ENCODE measurements at regions of chr3 and their contacts with region 1.

Region 1: DNA sequence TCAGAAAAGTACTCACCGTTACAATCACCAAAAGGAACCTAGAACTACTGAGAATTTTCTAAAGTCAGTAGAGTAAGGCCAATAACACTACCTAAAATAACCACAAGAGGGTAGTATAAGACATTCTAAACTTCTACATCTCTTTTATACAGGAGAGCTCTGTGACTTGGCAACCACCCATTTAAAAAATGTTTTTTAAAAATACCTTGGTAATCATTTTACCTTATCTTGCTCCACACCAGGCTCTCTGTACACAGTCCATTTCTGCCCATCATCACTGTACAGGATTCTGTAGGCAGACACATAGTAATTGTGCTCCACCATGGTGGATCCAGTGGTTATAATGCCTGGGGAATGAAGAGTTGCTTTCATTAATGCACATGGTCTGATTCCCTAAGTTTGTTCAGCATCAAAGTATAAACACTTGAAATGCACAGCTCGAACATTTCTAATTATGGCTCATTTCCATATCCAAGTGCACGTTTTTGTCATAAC is 54.5 kb downstream of the ST3GAL6 start:
- DNase-seq: peak; percentile 47 to 59
- ATAC-seq: peak; percentile 55 to 67; a peak in 5 of 6 replicates
- H3K4me3 ChIP-seq: no peak overlapping the region
- H3K27ac ChIP-seq: peak overlapping the region; percentile 51 to 76; a peak in 5 of 6 replicates
- H3K4me1 ChIP-seq: peaks cover 63% of the 10 kb centered on the region
- CTCF ChIP-seq: peak; percentile 71
- EP300 ChIP-seq: no peak
- POLR2A ChIP-seq: no peak
- RAD21 ChIP-seq: peak; percentile 70 to 79

Region 2: DNA sequence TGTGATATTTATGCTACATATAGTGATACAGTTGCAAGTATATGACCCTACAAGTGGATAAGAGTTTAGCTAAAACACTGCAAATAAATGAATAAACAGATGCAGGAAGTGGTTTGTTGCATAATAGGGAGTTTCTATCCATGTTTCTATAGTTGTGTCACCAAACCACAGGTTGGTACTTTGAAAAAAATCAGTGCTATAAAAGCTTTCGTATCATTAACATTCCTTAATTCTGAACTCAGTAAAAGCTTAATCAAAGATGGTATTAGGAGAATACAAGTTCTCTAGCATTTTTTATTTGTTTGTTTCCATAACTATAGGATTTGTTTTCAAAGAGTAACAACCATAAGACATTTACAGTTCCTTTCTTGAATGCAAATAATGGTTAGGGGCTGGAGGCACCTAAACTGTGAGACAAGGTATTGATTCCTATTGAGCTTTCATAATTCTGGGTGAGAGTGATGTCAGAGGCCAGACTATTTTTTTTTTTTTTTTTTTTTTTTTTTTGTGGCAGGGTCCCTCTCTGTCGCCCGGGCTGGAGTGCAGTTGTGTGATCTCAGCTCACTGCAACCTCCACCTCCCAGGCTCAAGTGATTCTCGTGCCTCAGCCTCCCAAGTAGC is 253.8 kb before region 1 on chr3:
- CTCF ChIA-PET with region 1: no interaction called
- POLR2A ChIA-PET with region 1: no interaction called
- DNase-seq: no peak
- ATAC-seq: no peak
- H3K4me3 ChIP-seq: no peak overlapping the region
- H3K27ac ChIP-seq: no peak overlapping the region
- H3K4me1 ChIP-seq: no peaks in the 10 kb centered on the region
- CTCF ChIP-seq: no peak
- EP300 ChIP-seq: no peak
- POLR2A ChIP-seq: no peak
- RAD21 ChIP-seq: no peak

Region 3: DNA sequence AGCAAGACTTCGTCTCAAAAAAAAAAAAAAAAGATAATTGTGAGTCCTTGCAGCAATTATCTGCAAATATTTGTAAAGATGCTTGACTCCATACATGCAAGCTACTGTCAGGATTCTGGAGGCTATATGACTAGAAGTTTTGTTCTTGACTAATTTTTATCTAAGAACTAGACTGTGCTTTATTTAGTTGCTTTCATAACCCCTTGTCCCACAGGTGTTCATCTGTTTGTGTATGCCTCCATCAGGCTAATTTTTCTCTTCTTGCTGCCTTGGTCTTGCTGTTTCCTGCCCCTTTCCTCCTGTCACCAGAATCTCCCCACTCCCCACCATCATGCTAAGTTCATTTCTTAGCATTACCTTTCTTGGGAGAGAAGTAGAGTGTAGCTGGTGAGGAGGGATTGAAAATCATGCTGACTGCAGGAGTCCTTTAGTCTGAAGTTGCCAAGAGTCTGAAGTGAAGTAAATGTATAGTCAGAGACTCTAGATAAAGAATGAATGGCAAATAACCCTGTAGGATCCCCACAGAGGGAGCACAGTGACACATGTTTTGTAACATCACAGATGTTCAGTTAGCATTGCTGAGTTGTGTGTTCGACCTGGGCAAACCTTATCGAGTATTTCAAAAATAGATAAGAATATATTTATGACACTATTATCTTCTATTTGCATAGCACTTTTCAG is 42.0 kb before region 1 on chr3:
- CTCF ChIA-PET with region 1: no interaction called
- POLR2A ChIA-PET with region 1: no interaction called
- DNase-seq: no peak
- ATAC-seq: no peak
- H3K4me3 ChIP-seq: no peak overlapping the region
- H3K27ac ChIP-seq: no peak overlapping the region
- H3K4me1 ChIP-seq: no peaks in the 10 kb centered on the region
- CTCF ChIP-seq: no peak
- EP300 ChIP-seq: no peak
- POLR2A ChIP-seq: no peak
- RAD21 ChIP-seq: no peak

Region 4: GRCh38 chr3:98980915-98981596 is 163.5 kb after region 1 on chr3:
- CTCF ChIA-PET with region 1: interaction called, 15 read pairs
- POLR2A ChIA-PET with region 1: no interaction called
- DNase-seq: peak in 1 of 2 experiments; percentile 51
- ATAC-seq: peak; percentile 31 to 57; a peak in 4 of 6 replicates
- H3K4me3 ChIP-seq: peak overlapping the region; percentile 44
- H3K27ac ChIP-seq: peak overlapping the region; percentile 86
- H3K4me1 ChIP-seq: peaks cover 80% of the 10 kb centered on the region
- CTCF ChIP-seq: no peak
- EP300 ChIP-seq: no peak
- POLR2A ChIP-seq: no peak
- RAD21 ChIP-seq: no peak

Region 5: GRCh38 chr3:98986073-98986472 is 168.5 kb after region 1 on chr3:
- CTCF ChIA-PET with region 1: interaction called, 111 read pairs
- POLR2A ChIA-PET with region 1: no interaction called
- DNase-seq: peak in 1 of 2 experiments; percentile 74
- ATAC-seq: peak; percentile 68 to 71; a peak in 5 of 6 replicates
- H3K4me3 ChIP-seq: peak overlapping the region; percentile 17; the same call in 1 of the 3 replicates
- H3K27ac ChIP-seq: peak overlapping the region; percentile 86 to 88
- H3K4me1 ChIP-seq: peaks cover 49% of the 10 kb centered on the region
- CTCF ChIP-seq: no peak
- EP300 ChIP-seq: no peak
- POLR2A ChIP-seq: no peak
- RAD21 ChIP-seq: no peak